ENCODE measurements at regions of chr7 and their contacts with region 1.

Region 1: DNA sequence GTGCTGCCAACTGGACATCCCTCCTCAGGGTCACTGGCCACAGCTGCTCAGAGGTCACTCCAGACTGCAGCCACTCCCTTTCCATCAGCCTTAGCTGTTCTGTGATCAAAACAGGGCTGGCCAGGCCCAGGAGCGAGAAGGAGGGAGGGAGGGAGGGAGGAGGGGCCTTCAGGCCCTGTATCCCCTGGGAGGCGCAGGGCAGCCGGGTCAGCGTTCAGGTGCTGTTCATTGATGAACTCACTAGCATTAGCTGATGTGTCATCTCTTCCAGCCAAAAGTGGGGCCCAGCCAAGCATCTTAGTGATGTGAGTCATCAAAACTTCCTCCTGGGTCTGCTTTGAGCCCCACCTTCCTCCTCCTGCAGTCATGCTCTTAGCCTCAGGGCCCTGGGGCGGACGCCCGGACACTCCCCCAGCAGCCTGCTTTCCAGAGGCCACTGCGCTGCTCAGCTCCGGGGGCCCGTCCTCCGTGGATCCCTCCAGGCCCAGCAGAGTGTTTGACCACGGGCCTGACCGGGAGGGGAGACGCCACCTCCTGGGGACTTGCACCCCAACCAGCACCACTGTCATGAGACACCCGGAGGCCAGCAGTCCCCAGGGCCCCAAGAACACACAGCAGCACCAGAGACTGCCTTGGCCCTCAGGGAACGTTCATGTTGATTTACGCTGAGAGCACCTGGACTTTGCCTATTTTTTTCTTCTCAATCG is 149.2 kb downstream of the PRKAG2 start:
- DNase-seq: peak; percentile 84
- H3K4me3 Mint-ChIP-seq: no peak overlapping the region
- H3K27ac Mint-ChIP-seq: no peak overlapping the region
- H3K4me1 Mint-ChIP-seq: peaks cover 14% of the 10 kb centered on the region
- H3K27me3 Mint-ChIP-seq: no peaks in the 10 kb centered on the region

Region 2: GRCh38 chr7:151626422-151627115 is 101.2 kb before region 1 on chr7:
- CTCF ChIA-PET with region 1: no interaction called
- POLR2A ChIA-PET with region 1: no interaction called
- intact Hi-C with region 1: no loop called
- DNase-seq: peak; percentile 45
- H3K4me3 Mint-ChIP-seq: no peak overlapping the region
- H3K27ac Mint-ChIP-seq: no peak overlapping the region
- H3K4me1 Mint-ChIP-seq: peaks cover 31% of the 10 kb centered on the region
- H3K27me3 Mint-ChIP-seq: no peaks in the 10 kb centered on the region

Region 3: DNA sequence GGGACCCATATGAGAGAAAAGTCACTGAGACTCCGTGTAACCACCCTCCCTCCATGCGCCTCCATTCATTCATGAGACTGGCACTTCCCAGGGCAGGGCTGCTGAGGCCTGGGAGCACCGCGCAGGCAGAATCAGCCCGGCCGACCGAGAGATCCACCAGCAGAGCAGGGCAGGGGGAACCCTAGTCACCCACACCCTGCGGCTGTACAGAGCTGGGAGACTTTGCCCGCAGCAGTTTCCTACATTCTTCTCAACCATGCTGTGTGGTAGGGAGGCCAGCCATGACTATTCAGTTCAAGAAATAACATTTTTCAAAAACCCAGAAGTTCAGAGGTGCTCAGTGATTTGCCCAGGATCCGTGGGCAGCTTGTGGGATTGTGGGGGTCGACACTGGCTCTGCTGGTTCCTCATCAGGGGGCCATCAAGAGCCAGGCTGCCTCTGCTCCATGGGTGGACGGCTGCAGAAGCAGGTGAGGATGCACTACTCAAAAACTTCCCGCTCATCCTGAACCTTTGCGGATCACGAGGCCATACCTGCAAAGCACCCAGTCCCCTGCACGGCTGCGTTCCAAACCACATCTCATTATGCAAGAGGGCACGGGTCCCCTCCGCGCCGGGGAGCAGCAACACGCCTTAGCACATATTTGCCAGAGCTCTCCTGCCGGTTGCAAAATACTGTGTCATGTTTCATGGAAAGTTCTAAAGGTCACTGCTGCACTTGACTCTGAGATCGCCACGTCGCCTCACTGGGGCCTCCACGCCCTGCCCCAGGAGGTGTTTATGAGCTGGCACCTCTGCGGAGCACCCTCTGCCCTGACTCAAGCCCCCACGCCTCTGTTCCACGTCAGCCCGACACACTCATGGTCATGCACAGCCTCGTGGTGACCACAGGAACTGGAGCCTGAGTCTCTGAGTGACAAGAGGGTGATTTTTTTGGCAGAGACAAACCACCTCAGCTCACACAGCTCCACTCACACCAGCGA is 17.2 kb after region 1 on chr7:
- CTCF ChIA-PET with region 1: interaction called, 3 read pairs
- POLR2A ChIA-PET with region 1: no interaction called
- intact Hi-C with region 1: loop called (anchors 2 kb)
- DNase-seq: peak; percentile 80
- H3K4me3 Mint-ChIP-seq: no peak overlapping the region
- H3K27ac Mint-ChIP-seq: no peak overlapping the region
- H3K4me1 Mint-ChIP-seq: peaks cover 41% of the 10 kb centered on the region
- H3K27me3 Mint-ChIP-seq: no peaks in the 10 kb centered on the region

Measured in activated CD4-positive, alpha-beta memory T cell treated with anti-CD3 and anti-CD28 coated beads for 36 hours (primary cell).